Activated T-helper 2 cell treated with anti-CD3 and anti-CD28 coated beads, Interferon-gamma antibody, Interleukin-2, Interleukin-4, amounts not matched to agents 10 μg/mL and 5 μg/mL and 100 μg/mL, durations not matched to agents 14 hours and 24 hours and 36 hours (primary cell): ENCODE measurements at regions of chr12 and their contacts with region 1.

Region 1: DNA sequence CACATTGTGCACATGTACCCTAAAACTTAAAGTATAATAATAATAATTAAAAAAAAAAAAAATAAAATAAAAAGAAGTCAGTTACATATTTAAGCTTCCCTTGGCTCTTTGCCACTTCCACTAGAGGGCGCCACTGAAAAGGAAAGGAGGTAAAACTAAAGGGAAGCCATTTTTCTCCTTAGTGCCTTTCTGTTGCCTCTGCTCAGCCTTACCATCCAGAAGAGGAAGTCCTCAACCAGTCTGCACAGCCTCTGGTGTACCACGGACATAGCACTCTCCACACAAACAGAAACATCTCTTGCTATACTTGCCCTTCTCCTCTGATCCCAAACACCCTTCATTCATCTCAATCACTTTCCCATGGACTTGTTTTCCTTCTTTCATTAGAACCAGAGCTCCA is 169.0 kb upstream of the EEA1 start:
- DNase-seq: peak; percentile 38
- H3K4me3 Mint-ChIP-seq: no peak overlapping the region
- H3K27ac Mint-ChIP-seq: no peak overlapping the region
- H3K4me1 Mint-ChIP-seq: peaks cover 10% of the 10 kb centered on the region
- H3K27me3 Mint-ChIP-seq: no peaks in the 10 kb centered on the region

Region 2: GRCh38 chr12:92784795-92785562 is 313.1 kb before region 1 on chr12:
- intact Hi-C with region 1: loop called (anchors 2 kb)
- DNase-seq: no peak
- H3K4me3 Mint-ChIP-seq: no peak overlapping the region
- H3K27ac Mint-ChIP-seq: no peak overlapping the region
- H3K4me1 Mint-ChIP-seq: peaks cover 1% of the 10 kb centered on the region
- H3K27me3 Mint-ChIP-seq: no peaks in the 10 kb centered on the region

Region 3: GRCh38 chr12:93243689-93244513 is 145.8 kb after region 1 on chr12:
- intact Hi-C with region 1: loop called (anchors 10 kb)
- DNase-seq: no peak
- H3K4me3 Mint-ChIP-seq: no peak overlapping the region
- H3K27ac Mint-ChIP-seq: peak overlapping the region; percentile 2
- H3K4me1 Mint-ChIP-seq: peaks cover 37% of the 10 kb centered on the region
- H3K27me3 Mint-ChIP-seq: no peaks in the 10 kb centered on the region

Region 4: DNA sequence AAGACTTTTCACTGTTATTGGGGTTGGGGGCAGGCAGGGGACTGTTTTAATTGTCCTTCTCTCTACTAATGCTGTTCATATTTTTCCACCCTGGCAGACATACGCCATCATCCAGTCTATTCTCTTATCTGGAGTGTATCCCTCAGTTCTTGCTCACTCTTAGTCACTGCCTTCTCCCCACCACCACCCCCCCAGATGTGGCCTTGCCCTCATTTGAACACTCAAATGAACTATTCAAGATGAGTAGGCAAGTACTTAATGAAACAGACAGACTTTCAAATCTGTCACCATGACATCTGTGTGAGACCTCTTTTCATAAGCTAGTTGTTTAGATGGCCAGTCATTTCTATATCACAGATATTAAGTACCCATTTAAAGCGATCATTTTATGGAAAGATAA is 289.7 kb after region 1 on chr12:
- intact Hi-C with region 1: loop called (anchors 2 kb)
- DNase-seq: no peak
- H3K4me3 Mint-ChIP-seq: no peak overlapping the region
- H3K27ac Mint-ChIP-seq: peak overlapping the region; percentile 72
- H3K4me1 Mint-ChIP-seq: peaks cover 41% of the 10 kb centered on the region
- H3K27me3 Mint-ChIP-seq: no peaks in the 10 kb centered on the region

Region 5: GRCh38 chr12:93407054-93407962 is 309.2 kb after region 1 on chr12:
- intact Hi-C with region 1: loop called (anchors 5 kb)
- DNase-seq: no peak
- H3K4me3 Mint-ChIP-seq: no peak overlapping the region
- H3K27ac Mint-ChIP-seq: peak overlapping the region; percentile 55
- H3K4me1 Mint-ChIP-seq: peaks cover 50% of the 10 kb centered on the region
- H3K27me3 Mint-ChIP-seq: no peaks in the 10 kb centered on the region